Right cardiac atrium (tissue), 5 donors: ENCODE measurements at regions of chr19 and their contacts with region 1.

Region 1: GRCh38 chr19:9934132-9934950 is 2.0 kb downstream of the OLFM2 start:
- DNase-seq: peak; percentile 77 to 89 (median 84)
- ATAC-seq: peak; percentile 76 to 85
- H3K4me3 ChIP-seq: no peak overlapping the region
- H3K27ac ChIP-seq: peak overlapping the region; percentile 8
- H3K4me1 ChIP-seq: no peaks in the 10 kb centered on the region
- H3K27me3 ChIP-seq: no peaks in the 10 kb centered on the region

Region 2: GRCh38 chr19:9865732-9866501 is 68.4 kb before region 1 on chr19:
- intact Hi-C with region 1: no loop called
- DNase-seq: peak in 1 of 3 donors; percentile 4
- ATAC-seq: no peak
- H3K4me3 ChIP-seq: no peak overlapping the region
- H3K27ac ChIP-seq: no peak overlapping the region
- H3K4me1 ChIP-seq: no peaks in the 10 kb centered on the region
- H3K27me3 ChIP-seq: no peaks in the 10 kb centered on the region

Region 3: GRCh38 chr19:9981406-9982260 is 47.3 kb after region 1 on chr19:
- intact Hi-C with region 1: no loop called
- DNase-seq: no peak
- ATAC-seq: no peak
- H3K4me3 ChIP-seq: no peak overlapping the region
- H3K27ac ChIP-seq: no peak overlapping the region
- H3K4me1 ChIP-seq: no peaks in the 10 kb centered on the region
- H3K27me3 ChIP-seq: no peaks in the 10 kb centered on the region

Region 4: GRCh38 chr19:10018263-10018662 is 83.9 kb after region 1 on chr19:
- intact Hi-C with region 1: loop called in 1 of 4 experiments (anchors 5 kb)
- DNase-seq: no peak
- ATAC-seq: no peak
- H3K4me3 ChIP-seq: no peak overlapping the region
- H3K27ac ChIP-seq: no peak overlapping the region
- H3K4me1 ChIP-seq: no peaks in the 10 kb centered on the region
- H3K27me3 ChIP-seq: no peaks in the 10 kb centered on the region

Region 5: GRCh38 chr19:10027158-10027693 is 92.9 kb after region 1 on chr19:
- intact Hi-C with region 1: loop called in 3 of 4 experiments (anchors 2 to 5 kb)
- DNase-seq: no peak
- ATAC-seq: peak in 1 of 2 donors; percentile 22
- H3K4me3 ChIP-seq: no peak overlapping the region
- H3K27ac ChIP-seq: no peak overlapping the region
- H3K4me1 ChIP-seq: no peaks in the 10 kb centered on the region
- H3K27me3 ChIP-seq: no peaks in the 10 kb centered on the region

Region 6: DNA sequence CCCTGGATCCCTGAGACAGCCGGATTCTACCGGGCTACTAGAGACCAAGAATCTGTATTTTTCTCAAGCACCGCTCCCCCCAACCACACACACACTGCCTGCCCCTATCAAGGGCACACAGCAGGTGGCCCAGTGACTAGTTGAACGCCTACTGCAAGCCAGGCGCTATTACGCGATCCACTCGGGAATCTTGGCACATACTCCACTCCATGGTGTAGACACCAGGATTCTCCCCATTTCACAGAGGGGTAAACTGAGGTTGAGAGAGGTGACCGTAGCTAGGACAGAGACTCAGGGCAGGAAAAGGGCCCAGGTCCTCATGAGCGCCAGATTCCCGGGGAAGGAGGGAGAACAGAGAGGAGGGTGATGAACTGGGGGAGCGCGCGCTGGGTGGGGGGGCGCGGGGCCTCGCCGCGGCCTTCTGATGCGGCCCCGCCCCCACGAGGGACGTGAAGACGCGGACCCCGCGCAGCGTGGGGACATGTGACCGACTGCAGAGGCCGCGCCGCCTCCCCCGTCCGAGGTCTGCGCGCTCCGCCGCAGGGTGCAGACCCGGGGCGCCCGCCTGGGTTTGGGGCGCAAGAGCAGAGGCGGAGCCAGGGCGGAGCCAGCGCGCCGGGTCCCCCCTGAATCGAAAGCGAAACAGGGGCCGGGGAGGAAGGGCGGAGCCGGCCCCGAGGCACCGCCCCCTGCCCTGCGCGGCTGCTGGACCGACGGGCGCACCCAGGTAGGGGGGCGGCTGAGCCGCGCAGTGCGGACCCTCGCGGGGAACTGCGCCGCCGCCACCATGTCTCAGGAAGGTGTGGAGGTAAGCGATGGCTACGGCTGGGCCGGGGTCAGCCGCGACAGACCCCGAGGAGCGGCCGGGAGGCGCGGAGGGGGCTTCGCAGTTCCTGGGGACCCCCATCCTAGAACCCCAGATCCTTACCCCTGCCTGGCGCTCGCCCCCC is 151.6 kb after region 1 on chr19 and contains the start of gene SHFL:
- intact Hi-C with region 1: no loop called
- DNase-seq: peak; percentile 78 to 93 (median 92)
- ATAC-seq: peak; percentile 94 to 95
- H3K4me3 ChIP-seq: peak within 1 kb of the TSS; percentile 75
- H3K27ac ChIP-seq: peak within 1 kb of the TSS; percentile 72
- H3K4me1 ChIP-seq: peaks cover 3% of the 10 kb centered on the region
- H3K27me3 ChIP-seq: no peaks in the 10 kb centered on the region
- total RNA-seq, gene SHFL: 14.5 to 16.0 (median 15.2) TPM

Region 7: DNA sequence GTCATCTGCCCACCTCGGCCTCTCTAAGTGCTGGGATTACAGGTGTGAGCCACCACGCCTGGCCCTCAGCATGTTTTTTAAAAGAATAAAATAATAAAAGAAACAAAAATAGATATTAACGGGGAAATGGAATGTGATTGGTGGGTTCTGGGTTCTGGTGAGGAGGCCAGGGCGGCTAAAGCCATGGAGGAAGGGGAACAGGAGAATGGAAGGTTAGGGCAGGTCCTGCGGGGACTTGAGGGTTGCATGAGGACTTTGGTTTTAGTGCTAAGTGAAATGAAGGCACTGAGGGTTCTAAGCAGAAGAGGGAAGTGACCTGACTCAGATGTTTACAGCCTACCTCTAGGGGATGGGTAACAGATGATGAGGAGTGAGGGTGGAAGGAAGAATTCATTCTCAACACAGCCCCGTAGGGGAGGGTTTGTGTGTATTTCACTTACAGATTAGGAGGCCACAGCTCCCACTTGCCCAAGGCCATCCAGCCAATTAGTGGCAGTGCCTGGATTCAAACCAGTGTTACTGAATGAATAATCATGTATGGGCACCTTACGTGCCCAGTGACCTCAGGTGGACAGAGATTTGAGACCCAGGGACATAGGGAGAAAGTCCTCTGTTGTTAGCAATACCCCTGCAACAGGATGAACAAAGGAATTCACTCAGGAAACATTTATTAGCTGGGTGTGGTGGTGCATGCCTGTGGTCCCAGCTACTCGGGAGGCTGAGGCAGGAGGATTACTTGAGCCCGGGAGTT is 311.0 kb after region 1 on chr19:
- intact Hi-C with region 1: loop called in 2 of 4 experiments (anchors 5 to 10 kb)
- DNase-seq: no peak
- ATAC-seq: no peak
- H3K4me3 ChIP-seq: no peak overlapping the region
- H3K27ac ChIP-seq: no peak overlapping the region
- H3K4me1 ChIP-seq: no peaks in the 10 kb centered on the region
- H3K27me3 ChIP-seq: no peaks in the 10 kb centered on the region

Region 8: GRCh38 chr19:10251792-10252694 is 317.7 kb after region 1 on chr19 and contains the start of gene MRPL4:
- intact Hi-C with region 1: loop called in 2 of 4 experiments (anchors 5 to 10 kb)
- DNase-seq: peak; percentile 96 to 99 (median 97)
- ATAC-seq: peak; percentile 95
- H3K4me3 ChIP-seq: peak within 1 kb of the TSS; percentile 56
- H3K27ac ChIP-seq: peak within 1 kb of the TSS; percentile 38
- H3K4me1 ChIP-seq: no peaks in the 10 kb centered on the region
- H3K27me3 ChIP-seq: no peaks in the 10 kb centered on the region
- total RNA-seq, gene MRPL4: 54.1 to 65.4 (median 60.5) TPM

Region 9: DNA sequence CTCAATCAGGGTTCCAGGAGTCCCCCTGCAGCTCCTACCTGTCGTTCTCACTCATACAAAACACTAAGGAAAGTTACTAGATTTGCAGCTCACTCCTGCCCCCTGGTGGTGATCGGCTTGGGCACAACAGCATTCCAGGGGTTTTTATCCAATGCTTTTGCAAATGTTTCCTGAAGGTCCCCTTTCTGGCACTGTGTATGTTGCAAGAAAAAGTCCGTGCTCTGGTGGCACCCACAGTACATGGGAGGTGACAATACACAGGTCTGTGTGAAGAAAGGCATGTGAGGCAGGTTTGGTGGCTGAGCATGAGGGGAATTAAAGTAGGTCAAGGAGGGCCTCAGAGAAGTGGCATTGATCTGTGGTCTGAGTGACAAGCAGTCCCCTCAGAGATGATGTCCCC is 454.6 kb after region 1 on chr19:
- intact Hi-C with region 1: loop called in 1 of 4 experiments (anchors 2 kb)
- DNase-seq: peak; percentile 85 to 96 (median 92)
- ATAC-seq: peak; percentile 62 to 68
- H3K4me3 ChIP-seq: no peak overlapping the region
- H3K27ac ChIP-seq: no peak overlapping the region
- H3K4me1 ChIP-seq: no peaks in the 10 kb centered on the region
- H3K27me3 ChIP-seq: no peaks in the 10 kb centered on the region